ENCODE measurements at regions of chr11 and their contacts with region 1.

Region 1: DNA sequence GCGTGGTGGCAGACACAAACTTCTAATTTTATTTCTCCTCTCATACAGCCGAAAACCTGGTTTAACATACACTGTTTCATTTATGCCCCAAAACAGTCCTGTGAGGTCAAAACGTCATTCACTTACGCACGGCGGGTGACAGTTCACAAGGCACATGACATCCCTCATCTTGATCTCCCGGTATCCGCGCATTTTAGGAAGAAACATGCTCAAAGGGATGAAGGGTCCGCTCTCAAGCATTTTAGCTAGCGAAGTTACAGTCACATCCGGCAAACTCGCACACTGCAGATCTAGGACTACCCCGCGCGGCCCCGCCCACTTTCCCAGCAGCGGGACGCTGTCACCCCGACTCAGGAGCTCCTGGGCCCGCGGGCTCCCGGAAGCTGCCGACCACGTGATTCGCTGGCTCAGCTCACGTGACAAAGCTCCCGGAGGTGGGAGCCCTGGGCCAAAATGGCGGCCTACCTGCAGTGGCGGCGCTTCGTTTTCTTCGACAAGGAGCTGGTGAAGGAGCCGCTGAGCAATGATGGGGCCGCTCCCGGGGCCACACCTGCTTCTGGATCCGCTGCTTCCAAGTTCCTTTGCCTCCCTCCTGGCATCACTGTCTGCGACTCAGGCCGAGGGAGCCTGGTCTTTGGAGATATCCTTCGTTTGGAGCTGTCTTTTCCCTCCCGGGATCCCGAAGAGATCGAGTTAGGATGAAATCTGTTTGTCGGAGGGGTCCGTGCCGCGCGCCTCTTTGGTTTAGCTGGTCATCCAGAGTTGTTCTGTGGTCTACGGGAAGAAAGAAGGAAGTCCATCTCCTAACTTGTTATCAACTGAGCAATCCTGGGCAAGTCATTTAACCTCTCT is at the start of gene VPS11:
- DNase-seq: peak; percentile 81 to 98 (median 97)
- ATAC-seq: peak; percentile 93
- H3K4me3 ChIP-seq: peak within 1 kb of the TSS; percentile 93
- H3K4me3 Mint-ChIP-seq: peak within 1 kb of the TSS; percentile 90 to 100 (median 95)
- H3K27ac ChIP-seq: peak within 1 kb of the TSS; percentile 96
- H3K27ac Mint-ChIP-seq: peak within 1 kb of the TSS; percentile 92 to 100 (median 97)
- H3K4me1 ChIP-seq: peaks cover 18 to 23% of the 10 kb centered on the region in 2 donors
- H3K4me1 Mint-ChIP-seq: peaks cover 26 to 59% (median 47%) of the 10 kb centered on the region in 7 donors
- H3K27me3 ChIP-seq: no peaks in the 10 kb centered on the region
- H3K27me3 Mint-ChIP-seq: no peaks in the 10 kb centered on the region
- total RNA-seq, gene VPS11: 39.0 to 73.9 (median 57.1) TPM

Region 2: GRCh38 chr11:119018074-119018938 is 49.3 kb before region 1 on chr11 and contains the starts of genes RPS25 and TRAPPC4:
- CTCF ChIA-PET with region 1: no interaction called
- POLR2A ChIA-PET with region 1: interaction called, 22 read pairs
- intact Hi-C with region 1: loop called (anchors 1 kb)
- DNase-seq: peak; percentile 87 to 98 (median 96)
- ATAC-seq: peak; percentile 93
- H3K4me3 ChIP-seq: peak within 1 kb of the TSS; percentile 89
- H3K4me3 Mint-ChIP-seq: peak within 1 kb of the TSS; percentile 96 to 100 (median 98)
- H3K27ac ChIP-seq: peak within 1 kb of the TSS; percentile 98
- H3K27ac Mint-ChIP-seq: peak within 1 kb of the TSS; percentile 99 to 100 (median 100)
- H3K4me1 ChIP-seq: peaks cover 30 to 32% of the 10 kb centered on the region in 2 donors
- H3K4me1 Mint-ChIP-seq: peaks cover 21 to 75% (median 50%) of the 10 kb centered on the region in 7 donors
- H3K27me3 ChIP-seq: no peaks in the 10 kb centered on the region
- H3K27me3 Mint-ChIP-seq: no peaks in the 10 kb centered on the region
- total RNA-seq, gene RPS25: 1,535 to 3,042 (median 2,772) TPM
- total RNA-seq, gene TRAPPC4: 70.7 to 80.3 (median 77.8) TPM

Region 3: DNA sequence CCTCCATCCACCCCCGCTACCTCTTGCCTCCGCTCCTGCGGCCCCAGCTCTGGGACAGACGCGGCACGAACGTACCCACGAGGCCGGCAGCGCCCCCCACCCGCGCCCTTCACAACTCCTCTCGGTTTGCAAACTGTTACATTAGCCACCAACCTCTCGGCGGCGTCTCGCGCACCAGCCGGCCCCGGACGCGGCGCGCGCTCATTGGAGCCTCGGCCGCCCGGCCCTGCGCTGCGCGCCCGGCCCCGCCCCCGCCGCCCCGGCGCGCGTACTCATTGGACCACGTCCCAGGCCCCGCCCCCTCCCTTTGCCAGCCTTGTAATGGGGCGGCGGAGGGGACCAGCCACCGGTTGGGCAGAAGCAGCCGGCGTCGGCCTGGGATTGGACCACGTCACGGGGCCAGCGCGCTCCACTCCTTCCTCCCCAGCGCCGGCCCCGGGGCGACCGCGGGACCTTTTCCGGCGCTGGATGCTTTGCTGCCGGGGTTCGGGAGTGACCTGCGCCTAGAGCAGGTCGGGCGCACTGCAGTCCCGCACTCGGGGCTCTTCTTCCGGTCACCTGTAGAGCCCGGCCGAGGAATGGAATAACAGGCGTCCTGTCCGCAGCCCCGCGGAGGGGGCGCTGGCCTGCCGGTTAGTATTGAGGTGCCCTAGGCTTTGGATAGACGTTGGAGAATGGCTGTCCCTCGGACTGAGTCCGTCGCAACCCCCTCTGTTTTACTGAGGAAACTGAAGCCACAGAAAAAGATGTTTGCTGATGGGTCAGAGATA is 10.4 kb before region 1 on chr11 and contains the start of gene HYOU1:
- CTCF ChIA-PET with region 1: interaction called, 8 read pairs
- POLR2A ChIA-PET with region 1: interaction called, 63 read pairs
- intact Hi-C with region 1: loop called (anchors 1 kb)
- DNase-seq: peak; percentile 97 to 98 (median 98)
- ATAC-seq: peak; percentile 98
- H3K4me3 ChIP-seq: peak within 1 kb of the TSS; percentile 73
- H3K4me3 Mint-ChIP-seq: peak within 1 kb of the TSS; percentile 90 to 99 (median 95)
- H3K27ac ChIP-seq: peak within 1 kb of the TSS; percentile 96
- H3K27ac Mint-ChIP-seq: peak within 1 kb of the TSS; percentile 86 to 99 (median 95)
- H3K4me1 ChIP-seq: peaks cover 18 to 20% of the 10 kb centered on the region in 2 donors
- H3K4me1 Mint-ChIP-seq: peaks cover 22 to 44% (median 35%) of the 10 kb centered on the region in 7 donors
- H3K27me3 ChIP-seq: no peaks in the 10 kb centered on the region
- H3K27me3 Mint-ChIP-seq: no peaks in the 10 kb centered on the region
- total RNA-seq, gene HYOU1: 77.8 to 198 (median 110) TPM

Region 4: GRCh38 chr11:119121008-119121810 is 53.6 kb after region 1 on chr11 and contains the start of gene HINFP:
- CTCF ChIA-PET with region 1: no interaction called
- POLR2A ChIA-PET with region 1: interaction called, 17 read pairs
- intact Hi-C with region 1: loop called (anchors 1 kb)
- DNase-seq: peak; percentile 92 to 100 (median 98)
- ATAC-seq: peak; percentile 99
- H3K4me3 ChIP-seq: peak within 1 kb of the TSS; percentile 71
- H3K4me3 Mint-ChIP-seq: peak within 1 kb of the TSS; percentile 86 to 98 (median 94)
- H3K27ac ChIP-seq: peak within 1 kb of the TSS; percentile 85
- H3K27ac Mint-ChIP-seq: peak within 1 kb of the TSS; percentile 78 to 98 (median 95)
- H3K4me1 ChIP-seq: peaks cover 17 to 23% of the 10 kb centered on the region in 2 donors
- H3K4me1 Mint-ChIP-seq: peaks cover 34 to 58% (median 50%) of the 10 kb centered on the region in 7 donors
- H3K27me3 ChIP-seq: no peaks in the 10 kb centered on the region
- H3K27me3 Mint-ChIP-seq: no peaks in the 10 kb centered on the region
- total RNA-seq, gene HINFP: 30.7 to 79.7 (median 42.7) TPM

Region 5: GRCh38 chr11:119196833-119197483 is 129.4 kb after region 1 on chr11:
- CTCF ChIA-PET with region 1: interaction called, 6 read pairs
- POLR2A ChIA-PET with region 1: interaction called, 7 read pairs
- intact Hi-C with region 1: loop called (anchors 1 kb)
- DNase-seq: peak in 8 of 9 donors; percentile 51 to 84 (median 78)
- ATAC-seq: peak; percentile 98
- H3K4me3 ChIP-seq: no peak overlapping the region
- H3K4me3 Mint-ChIP-seq: no peak overlapping the region
- H3K27ac ChIP-seq: no peak overlapping the region
- H3K27ac Mint-ChIP-seq: no peak overlapping the region
- H3K4me1 ChIP-seq: no peaks in the 10 kb centered on the region
- H3K4me1 Mint-ChIP-seq: peaks cover 0 to 10% (median 5%) of the 10 kb centered on the region in 7 donors
- H3K27me3 ChIP-seq: no peaks in the 10 kb centered on the region
- H3K27me3 Mint-ChIP-seq: peaks cover 0 to 5% (median 0%) of the 10 kb centered on the region in 5 donors

Measured in naive thymus-derived CD4-positive, alpha-beta T cell (primary cell).